H1 (cell line): ENCODE measurements at regions of chr1 and their contacts with region 1.

Region 1: GRCh38 chr1:48572646-48573261 is 100.8 kb upstream of the SPATA6 start:
- DNase-seq: peak; percentile 79 to 80
- H3K4me3 ChIP-seq: no peak overlapping the region
- H3K27ac ChIP-seq: no peak overlapping the region
- H3K4me1 ChIP-seq: peaks cover 0 to 4% (median 0%) of the 10 kb centered on the region in 4 experiments; a peak in 1 of 7 replicates
- H3K27me3 ChIP-seq: no peaks in the 10 kb centered on the region
- CTCF ChIP-seq: peak; percentile 94 to 99 (median 96)
- EP300 ChIP-seq: no peak
- POLR2A ChIP-seq: no peak
- RAD21 ChIP-seq: peak; percentile 99 to 100

Region 2: GRCh38 chr1:48493970-48494769 is 78.6 kb before region 1 on chr1:
- CTCF ChIA-PET with region 1: no interaction called
- POLR2A ChIA-PET with region 1: no interaction called
- DNase-seq: no peak
- H3K4me3 ChIP-seq: no peak overlapping the region
- H3K27ac ChIP-seq: no peak overlapping the region
- H3K4me1 ChIP-seq: peaks cover 0 to 11% (median 3%) of the 10 kb centered on the region in 4 experiments; a peak in 2 of 7 replicates
- H3K27me3 ChIP-seq: no peaks in the 10 kb centered on the region
- CTCF ChIP-seq: no peak
- EP300 ChIP-seq: no peak
- POLR2A ChIP-seq: no peak
- RAD21 ChIP-seq: no peak

Region 3: DNA sequence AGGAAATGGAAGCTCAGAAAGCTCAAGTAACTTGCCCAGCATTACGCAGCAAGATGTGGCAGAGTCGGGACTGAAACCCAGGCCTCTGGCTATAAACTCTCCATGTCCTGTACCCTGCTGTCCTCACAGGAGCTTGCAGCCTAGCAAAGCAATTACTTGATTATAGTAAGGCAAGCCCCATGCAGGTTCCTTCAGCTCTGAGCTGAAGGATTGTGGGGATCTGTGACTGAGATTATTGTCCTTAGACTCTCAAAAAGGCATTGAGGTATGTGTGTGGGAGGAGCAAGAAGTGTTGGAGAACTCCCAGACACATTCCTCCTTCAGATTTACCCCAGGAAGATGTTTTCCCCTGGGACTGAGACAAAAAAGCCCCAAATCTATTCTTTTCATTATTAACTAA is 23.3 kb after region 1 on chr1:
- CTCF ChIA-PET with region 1: interaction called, 15 read pairs
- POLR2A ChIA-PET with region 1: no interaction called
- DNase-seq: peak in 1 of 2 experiments; percentile 47
- H3K4me3 ChIP-seq: no peak overlapping the region
- H3K27ac ChIP-seq: no peak overlapping the region
- H3K4me1 ChIP-seq: peaks cover 4 to 9% (median 7%) of the 10 kb centered on the region in 4 experiments; a peak in 4 of 7 replicates
- H3K27me3 ChIP-seq: no peaks in the 10 kb centered on the region
- CTCF ChIP-seq: no peak
- EP300 ChIP-seq: no peak
- POLR2A ChIP-seq: no peak
- RAD21 ChIP-seq: no peak

Region 4: DNA sequence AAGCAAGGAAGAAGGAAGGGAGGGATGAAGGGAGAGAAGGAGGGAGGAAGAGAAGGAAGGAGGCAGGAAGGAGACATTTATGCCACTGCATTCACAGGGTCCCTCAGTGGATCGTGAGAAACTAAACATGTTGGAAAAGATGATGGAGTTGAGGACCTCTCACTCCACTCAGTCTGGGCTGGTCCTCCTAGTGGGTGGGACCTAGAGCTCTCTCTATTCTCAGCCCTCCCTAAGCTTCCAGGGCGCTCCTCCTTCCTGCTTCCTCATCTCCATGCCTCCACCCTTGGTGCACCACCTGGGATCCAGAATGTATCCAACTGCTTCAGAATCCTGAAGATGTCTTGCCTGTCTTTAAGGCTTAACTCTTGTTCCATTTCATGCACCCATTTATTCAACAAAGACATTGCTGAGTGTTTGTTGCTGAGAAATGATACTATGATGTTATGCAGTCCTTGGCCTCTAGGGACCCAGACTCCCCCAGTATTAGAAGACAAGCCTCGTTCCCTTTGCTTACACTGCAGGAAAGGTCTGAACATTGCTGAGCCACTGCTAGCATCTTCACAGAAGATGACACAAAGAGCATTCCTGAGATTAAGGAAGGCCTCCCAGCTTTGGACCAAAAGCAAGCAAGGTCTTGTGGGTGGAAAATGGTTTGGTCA is 115.5 kb after region 1 on chr1:
- CTCF ChIA-PET with region 1: interaction called, 20 read pairs
- POLR2A ChIA-PET with region 1: no interaction called
- DNase-seq: no peak
- H3K4me3 ChIP-seq: no peak overlapping the region
- H3K27ac ChIP-seq: no peak overlapping the region
- H3K4me1 ChIP-seq: peaks cover 0 to 5% (median 0%) of the 10 kb centered on the region in 4 experiments; a peak in 1 of 7 replicates
- H3K27me3 ChIP-seq: no peaks in the 10 kb centered on the region
- CTCF ChIP-seq: peak in 2 of 3 experiments; percentile 38 to 74; a peak in 2 of 4 replicates
- EP300 ChIP-seq: no peak
- POLR2A ChIP-seq: no peak
- RAD21 ChIP-seq: peak; percentile 40 to 46; a peak in 3 of 4 replicates

Region 5: GRCh38 chr1:48710318-48710717 is 137.6 kb after region 1 on chr1:
- CTCF ChIA-PET with region 1: interaction called, 10 read pairs
- POLR2A ChIA-PET with region 1: no interaction called
- DNase-seq: peak; percentile 10 to 56
- H3K4me3 ChIP-seq: peak overlapping the region in 1 of 4 experiments; percentile 14; a peak in 2 of 8 replicates
- H3K27ac ChIP-seq: peak overlapping the region; percentile 68
- H3K4me1 ChIP-seq: peaks cover 3 to 13% (median 7%) of the 10 kb centered on the region in 4 experiments; a peak in 6 of 7 replicates
- H3K27me3 ChIP-seq: no peaks in the 10 kb centered on the region
- CTCF ChIP-seq: no peak
- EP300 ChIP-seq: no peak; a peak in 1 of 3 replicates
- POLR2A ChIP-seq: 0 out of 3 replicates have a peak, but pooled peaks of 1 of the 2 experiments have one; percentile 40
- RAD21 ChIP-seq: no peak

Region 6: DNA sequence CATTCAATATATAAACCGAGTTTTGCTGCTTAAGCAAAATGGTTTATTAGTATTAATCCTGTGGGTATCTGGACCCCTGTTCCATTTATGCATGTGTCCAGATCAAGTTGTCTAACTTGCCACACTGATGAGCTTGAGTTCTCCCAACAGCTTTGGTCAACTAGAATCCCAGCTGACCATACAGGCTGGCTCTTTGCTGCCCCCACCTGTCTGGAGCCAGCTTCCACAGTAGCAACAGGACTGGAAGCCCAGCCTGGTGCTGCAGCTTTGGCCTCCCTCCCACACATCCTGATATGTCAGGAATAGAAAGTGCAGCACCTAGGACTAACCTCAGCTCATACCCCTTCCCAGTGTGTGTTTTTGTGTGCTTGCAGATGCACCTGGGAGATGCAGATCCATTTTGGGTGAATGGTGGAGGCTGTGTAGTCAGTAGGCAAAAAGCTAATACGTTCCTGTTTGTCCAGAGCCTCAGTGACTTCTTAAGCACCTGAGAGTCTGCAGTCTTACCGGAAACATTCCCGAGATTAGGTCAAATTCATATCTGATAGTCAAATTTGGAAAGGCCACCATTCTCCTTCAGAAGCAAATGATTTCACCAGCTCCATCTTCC is 244.9 kb after region 1 on chr1:
- CTCF ChIA-PET with region 1: interaction called, 18 read pairs
- POLR2A ChIA-PET with region 1: no interaction called
- DNase-seq: peak; percentile 31 to 76
- H3K4me3 ChIP-seq: no peak overlapping the region
- H3K27ac ChIP-seq: no peak overlapping the region
- H3K4me1 ChIP-seq: no peaks in the 10 kb centered on the region
- H3K27me3 ChIP-seq: no peaks in the 10 kb centered on the region
- CTCF ChIP-seq: peak; percentile 88 to 93 (median 91)
- EP300 ChIP-seq: no peak
- POLR2A ChIP-seq: no peak
- RAD21 ChIP-seq: peak; percentile 88 to 92